Activated T-helper 1 cell treated with anti-CD3 and anti-CD28 coated beads, Interleukin-12 subunit alpha, Interleukin-12 subunit beta, Interleukin-2, Interleukin-4 antibody, amounts not matched to agents 30 ng/mL and 10 ng/mL and 1 ng/mL, durations not matched to agents 14 hours and 24 hours and 36 hours (primary cell): ENCODE measurements at regions of chr5 and their contacts with region 1.

Region 1: DNA sequence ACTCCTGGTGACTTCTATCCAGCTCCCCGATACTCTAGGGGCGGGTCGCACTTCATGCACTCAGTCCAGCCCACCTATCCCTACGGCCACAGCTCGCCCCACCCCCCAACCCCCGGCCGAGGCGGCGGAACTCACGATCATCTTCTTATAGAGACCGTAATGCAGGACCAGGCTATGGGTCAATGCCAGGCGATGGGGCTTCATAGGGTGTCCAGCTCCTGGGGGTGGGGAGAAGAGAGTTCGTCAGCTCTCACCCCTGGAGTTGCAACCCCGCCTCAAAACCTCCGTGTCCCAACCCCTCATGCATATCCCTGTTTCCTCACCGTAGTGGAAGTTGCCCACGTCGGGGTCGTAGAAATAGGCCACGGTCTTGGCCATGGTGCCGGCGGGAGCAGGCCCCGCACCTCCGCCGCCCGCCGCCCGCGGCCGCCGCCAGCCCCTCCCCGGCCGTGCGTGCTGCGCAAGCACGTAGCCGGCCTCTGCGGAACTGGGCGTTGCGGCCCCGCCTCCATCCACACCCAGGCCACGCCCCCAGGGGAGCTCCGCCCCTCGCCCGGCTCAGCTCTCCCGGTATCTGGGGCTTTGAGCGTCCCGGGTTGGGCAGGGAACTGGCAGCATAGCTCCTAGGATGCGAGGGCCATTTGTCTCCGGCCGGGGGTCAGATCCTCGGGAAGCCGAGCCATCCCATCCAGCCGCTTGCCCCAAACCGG is at the starts of genes HDAC3 and RELL2:
- DNase-seq: peak; percentile 92
- H3K4me3 Mint-ChIP-seq: peak within 1 kb of the TSS; percentile 93
- H3K27ac Mint-ChIP-seq: peak within 1 kb of the TSS; percentile 80
- H3K4me1 Mint-ChIP-seq: peaks cover 53% of the 10 kb centered on the region
- H3K27me3 Mint-ChIP-seq: no peaks in the 10 kb centered on the region
- total RNA-seq, gene HDAC3: 83.1 and 87.2 TPM in 2 replicates
- total RNA-seq, gene RELL2: 19.3 and 19.5 TPM in 2 replicates

Region 2: GRCh38 chr5:141320225-141321169 is 316.1 kb before region 1 on chr5 and contains the start of gene TAF7:
- intact Hi-C with region 1: loop called (anchors 5 kb)
- DNase-seq: peak; percentile 91
- H3K4me3 Mint-ChIP-seq: peak within 1 kb of the TSS; percentile 94
- H3K27ac Mint-ChIP-seq: peak within 1 kb of the TSS; percentile 98
- H3K4me1 Mint-ChIP-seq: peaks cover 31% of the 10 kb centered on the region
- H3K27me3 Mint-ChIP-seq: no peaks in the 10 kb centered on the region
- total RNA-seq, gene TAF7: 71.6 and 73.7 TPM in 2 replicates

Region 3: DNA sequence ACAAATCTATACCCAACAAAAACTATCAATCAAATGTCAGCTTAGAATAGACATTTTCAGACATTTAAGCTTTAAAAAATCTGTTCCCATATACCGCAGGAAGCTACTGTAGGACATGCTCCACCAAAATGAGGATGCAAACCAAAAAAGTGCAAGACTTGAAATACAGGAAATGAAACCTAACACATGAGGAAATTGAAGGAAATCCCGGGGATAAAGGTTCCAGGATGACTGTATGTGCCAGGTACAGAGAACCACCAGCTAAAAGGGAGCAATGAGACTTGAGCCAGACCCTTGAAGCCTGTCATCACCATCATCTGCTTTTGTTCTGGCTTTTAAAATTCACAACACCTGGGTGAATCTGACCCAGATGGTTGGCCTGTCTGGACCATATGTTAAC is 39.2 kb before region 1 on chr5:
- intact Hi-C with region 1: loop called (anchors 1 kb)
- DNase-seq: no peak
- H3K4me3 Mint-ChIP-seq: no peak overlapping the region
- H3K27ac Mint-ChIP-seq: peak overlapping the region; percentile 5
- H3K4me1 Mint-ChIP-seq: peaks cover 66% of the 10 kb centered on the region
- H3K27me3 Mint-ChIP-seq: no peaks in the 10 kb centered on the region

Region 4: GRCh38 chr5:141605523-141606277 is 30.9 kb before region 1 on chr5:
- intact Hi-C with region 1: loop called (anchors 1 kb)
- DNase-seq: peak; percentile 76
- H3K4me3 Mint-ChIP-seq: peak overlapping the region; percentile 45
- H3K27ac Mint-ChIP-seq: peak overlapping the region; percentile 85
- H3K4me1 Mint-ChIP-seq: peaks cover 78% of the 10 kb centered on the region
- H3K27me3 Mint-ChIP-seq: no peaks in the 10 kb centered on the region

Region 5: GRCh38 chr5:141866149-141867120 is 229.9 kb after region 1 on chr5:
- intact Hi-C with region 1: no loop called
- DNase-seq: no peak
- H3K4me3 Mint-ChIP-seq: no peak overlapping the region
- H3K27ac Mint-ChIP-seq: no peak overlapping the region
- H3K4me1 Mint-ChIP-seq: no peaks in the 10 kb centered on the region
- H3K27me3 Mint-ChIP-seq: peaks cover 21% of the 10 kb centered on the region

Region 6: GRCh38 chr5:141923448-141924352 is 287.1 kb after region 1 on chr5 and contains the start of gene DELE1:
- intact Hi-C with region 1: loop called (anchors 2 kb)
- DNase-seq: peak; percentile 88
- H3K4me3 Mint-ChIP-seq: peak within 1 kb of the TSS; percentile 92
- H3K27ac Mint-ChIP-seq: peak within 1 kb of the TSS; percentile 96
- H3K4me1 Mint-ChIP-seq: peaks cover 32% of the 10 kb centered on the region
- H3K27me3 Mint-ChIP-seq: no peaks in the 10 kb centered on the region
- total RNA-seq, gene DELE1: 68.4 and 81.5 TPM in 2 replicates